ENCODE measurements at regions of chr11 and their contacts with region 1.

Region 1: GRCh38 chr11:111694851-111695250 is 71.3 kb downstream of the PPP2R1B start:
- DNase-seq: no peak
- CTCF ChIP-seq: no peak

Region 2: DNA sequence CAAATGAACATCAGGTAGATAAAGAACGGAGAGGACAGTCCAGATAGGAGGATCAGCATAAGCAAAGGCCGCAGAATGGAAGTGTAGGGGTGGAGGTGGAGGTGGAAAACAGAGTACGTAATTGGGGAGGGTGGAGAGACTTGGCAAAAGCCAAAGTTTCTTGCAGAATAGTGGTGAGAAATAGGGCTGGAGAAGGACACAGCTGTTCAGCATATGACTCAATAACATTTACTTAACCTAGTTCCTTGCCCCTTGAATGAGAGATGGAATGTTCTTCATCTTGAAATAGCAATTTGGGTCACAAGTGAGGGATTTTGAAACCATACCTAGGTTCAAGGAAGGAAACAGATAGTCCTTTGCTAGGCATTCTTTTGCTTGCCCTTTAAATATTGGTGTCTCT is 746.7 kb before region 1 on chr11:
- CTCF ChIA-PET with region 1: no interaction called
- POLR2A ChIA-PET with region 1: no interaction called
- DNase-seq: no peak
- CTCF ChIP-seq: no peak

Region 3: DNA sequence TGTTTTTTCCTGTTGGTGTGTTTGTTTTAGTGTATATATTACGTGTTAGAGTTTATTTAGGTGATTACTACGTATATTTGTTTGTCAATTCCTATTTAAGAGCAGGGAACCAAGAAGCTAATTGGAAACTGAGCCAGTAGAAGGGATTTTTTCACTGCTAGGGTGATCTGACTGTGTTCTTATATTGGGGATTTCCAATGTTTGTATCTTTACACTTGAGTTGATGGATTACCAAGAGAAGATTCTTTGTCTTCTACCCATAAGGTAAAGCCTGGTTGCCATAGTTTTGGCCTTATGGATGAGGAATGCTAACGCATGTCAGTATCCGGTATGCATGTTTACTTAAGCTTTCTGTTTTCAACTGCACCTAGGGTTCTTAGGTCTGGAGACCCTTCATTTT is 57.0 kb before region 1 on chr11:
- CTCF ChIA-PET with region 1: no interaction called
- POLR2A ChIA-PET with region 1: no interaction called
- DNase-seq: no peak
- CTCF ChIP-seq: no peak

Region 4: DNA sequence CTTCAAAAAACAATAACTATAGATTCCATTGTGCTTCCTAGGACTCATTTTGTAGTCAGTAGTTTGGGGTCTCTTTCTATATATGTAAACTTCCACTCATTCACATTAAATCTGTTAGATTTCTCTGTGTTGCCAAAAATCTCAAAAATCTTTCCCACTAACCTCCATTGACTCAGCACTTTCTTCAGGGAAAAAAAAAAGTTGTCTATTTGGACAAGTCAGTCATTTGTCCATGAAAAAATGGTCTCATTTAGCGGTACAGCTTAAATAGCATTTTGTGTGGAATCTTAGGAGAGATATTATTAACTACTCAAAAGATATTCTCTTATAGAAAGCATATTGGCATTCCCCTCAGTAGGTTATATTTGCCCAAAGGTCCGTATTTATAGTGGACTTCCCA is 10.6 kb before region 1 on chr11:
- CTCF ChIA-PET with region 1: interaction called, 18 read pairs
- POLR2A ChIA-PET with region 1: no interaction called
- DNase-seq: no peak
- CTCF ChIP-seq: no peak

Region 5: GRCh38 chr11:111707039-111707690 is 12.3 kb after region 1 on chr11:
- CTCF ChIA-PET with region 1: interaction called, 18 read pairs
- POLR2A ChIA-PET with region 1: no interaction called
- DNase-seq: no peak
- CTCF ChIP-seq: no peak

Measured in GM10248 (cell line).